RWPE1 (cell line): ENCODE measurements at regions of chr9 and their contacts with region 1.

Region 1: DNA sequence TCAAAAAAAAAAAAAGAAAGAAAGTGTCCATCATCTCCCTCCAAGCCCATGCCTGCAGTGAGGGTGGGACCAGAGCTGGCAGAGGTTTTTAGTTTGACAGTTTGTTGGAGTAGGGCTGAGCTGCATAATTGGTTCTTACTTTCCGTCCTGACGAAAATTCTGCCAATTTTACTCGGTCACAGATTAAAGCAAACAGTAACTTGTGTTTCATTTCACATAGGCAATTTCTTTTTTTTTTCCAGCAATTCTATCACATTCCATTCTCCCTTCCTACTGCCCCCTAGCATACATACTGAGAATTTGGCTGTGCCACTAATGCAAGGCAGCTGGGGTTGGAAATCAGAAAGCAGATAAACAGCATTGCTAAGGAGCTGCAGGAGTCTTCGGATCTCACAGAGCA is 132.4 kb downstream of the FRMD3 start:
- DNase-seq: no peak
- H3K27ac ChIP-seq: no peak overlapping the region
- CTCF ChIP-seq: no peak

Region 2: DNA sequence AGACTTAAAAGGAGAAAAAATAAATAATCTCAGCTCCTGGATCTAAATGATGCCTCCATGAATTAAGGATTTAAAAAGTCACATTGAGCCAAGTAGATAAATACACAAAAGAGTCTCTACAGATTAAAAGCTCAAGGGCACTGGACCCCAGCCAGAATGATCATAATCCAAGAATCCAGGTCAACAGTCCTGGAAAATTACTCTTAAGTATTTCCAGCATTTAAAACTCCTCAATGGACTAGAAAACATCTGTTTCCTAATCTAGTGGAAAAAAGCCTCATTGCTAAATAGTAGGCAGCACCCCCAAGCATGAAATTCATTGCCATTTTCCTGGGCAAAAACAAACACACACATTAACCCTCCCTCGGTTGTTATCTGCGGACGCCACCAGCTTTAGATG is 35.6 kb after region 1 on chr9:
- CTCF ChIA-PET with region 1: interaction called, 12 read pairs
- POLR2A ChIA-PET with region 1: no interaction called
- DNase-seq: no peak
- H3K27ac ChIP-seq: no peak overlapping the region
- CTCF ChIP-seq: no peak